ENCODE measurements at regions of chr1 and their contacts with region 1.

Region 1: DNA sequence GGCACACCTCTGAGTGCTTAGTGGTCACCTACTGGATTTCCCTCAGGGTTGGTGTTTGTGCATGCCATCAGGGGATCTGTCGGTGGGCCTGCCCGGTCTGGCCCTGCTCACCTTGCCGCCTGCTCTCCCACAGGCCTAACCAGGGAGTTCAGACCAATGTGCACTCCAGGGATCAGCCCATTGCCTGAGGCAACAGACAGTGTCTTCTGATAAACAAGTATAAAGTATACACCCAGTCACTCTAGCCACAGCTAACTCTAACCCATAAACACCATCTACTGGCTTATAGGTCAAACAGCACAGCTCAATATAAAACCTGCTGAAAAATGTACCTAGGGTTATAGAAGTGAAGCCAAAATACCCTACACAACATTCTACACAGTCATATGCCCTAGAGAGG is 1300.0 kb downstream of the PLA2G4A start:
- DNase-seq: no peak
- H3K4me3 ChIP-seq: no peak overlapping the region
- H3K4me3 Mint-ChIP-seq: no peak overlapping the region
- H3K27ac ChIP-seq: no peak overlapping the region
- H3K27ac Mint-ChIP-seq: no peak overlapping the region
- H3K4me1 ChIP-seq: no peaks in the 10 kb centered on the region
- H3K4me1 Mint-ChIP-seq: no peaks in the 10 kb centered on the region
- H3K27me3 ChIP-seq: no peaks in the 10 kb centered on the region
- H3K27me3 Mint-ChIP-seq: no peaks in the 10 kb centered on the region
- CTCF ChIP-seq: no peak

Region 2: DNA sequence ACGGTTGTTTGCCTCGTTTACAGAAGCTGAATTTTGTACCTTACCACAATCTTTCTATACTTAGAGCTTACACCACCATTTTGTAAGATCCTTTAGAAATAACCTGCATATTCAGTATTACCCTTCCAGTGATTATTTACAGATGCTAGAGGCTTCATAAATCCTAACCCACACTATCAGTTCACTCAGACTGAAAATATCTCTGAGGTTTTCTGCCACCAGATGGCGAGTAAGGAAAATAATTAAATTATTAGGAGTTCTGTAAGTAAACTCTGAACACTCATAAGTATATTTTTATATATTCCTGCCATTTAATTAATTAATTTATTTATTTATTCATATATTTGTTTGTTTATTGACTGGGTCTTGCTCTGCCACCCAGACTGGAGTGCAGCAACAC is 335.2 kb after region 1 on chr1:
- intact Hi-C with region 1: loop called in 1 of 2 experiments (anchors 10 kb)
- DNase-seq: no peak
- H3K4me3 ChIP-seq: no peak overlapping the region
- H3K4me3 Mint-ChIP-seq: no peak overlapping the region
- H3K27ac ChIP-seq: no peak overlapping the region
- H3K27ac Mint-ChIP-seq: no peak overlapping the region
- H3K4me1 ChIP-seq: no peaks in the 10 kb centered on the region
- H3K4me1 Mint-ChIP-seq: no peaks in the 10 kb centered on the region
- H3K27me3 ChIP-seq: no peaks in the 10 kb centered on the region
- H3K27me3 Mint-ChIP-seq: no peaks in the 10 kb centered on the region
- CTCF ChIP-seq: no peak